Caco-2 (cell line): ENCODE measurements at regions of chr5 and their contacts with region 1.

Region 1: GRCh38 chr5:1107167-1108022 is 4.5 kb downstream of the SLC12A7 start:
- DNase-seq: peak; percentile 50 to 75
- H3K4me3 ChIP-seq: no peak overlapping the region
- H3K4me3 Mint-ChIP-seq: no peak overlapping the region
- H3K27ac Mint-ChIP-seq: peak overlapping the region; percentile 8
- H3K4me1 ChIP-seq: peaks cover 50% of the 10 kb centered on the region
- H3K4me1 Mint-ChIP-seq: peaks cover 21% of the 10 kb centered on the region
- H3K27me3 ChIP-seq: no peaks in the 10 kb centered on the region
- H3K27me3 Mint-ChIP-seq: no peaks in the 10 kb centered on the region
- CTCF ChIP-seq: peak in 1 of 2 experiments; percentile 57

Region 2: DNA sequence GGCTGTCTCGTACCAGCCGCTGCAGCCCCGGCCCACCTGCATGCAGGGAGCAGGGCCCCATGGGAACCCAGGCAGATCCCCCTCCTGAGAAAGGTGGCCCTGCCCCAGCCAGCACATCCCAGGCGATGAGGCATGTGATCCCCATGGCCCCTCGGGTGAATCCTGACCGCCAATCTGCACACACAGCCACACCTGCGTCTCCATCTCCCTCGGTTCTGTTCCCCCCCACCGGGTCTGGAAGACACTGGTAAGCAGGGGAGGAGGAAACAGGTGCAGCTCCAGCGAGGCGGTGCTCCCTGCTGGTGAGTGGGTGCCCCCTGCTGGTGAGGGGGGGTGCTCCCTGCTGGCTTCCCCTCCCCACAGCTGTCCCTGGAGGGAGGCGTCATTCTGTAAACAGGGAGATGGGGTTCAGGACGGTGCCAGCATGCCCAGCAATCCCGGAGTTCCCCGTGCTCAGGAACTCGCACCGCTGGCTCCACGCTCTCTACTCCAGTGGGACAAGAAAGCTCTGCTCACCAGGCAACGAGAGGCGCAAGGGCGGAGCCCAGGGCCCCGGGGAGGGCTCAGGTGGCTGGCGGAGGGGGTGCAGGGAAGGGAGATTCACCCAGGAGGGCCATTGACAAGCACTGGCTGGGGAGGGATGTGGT is 32.9 kb after region 1 on chr5:
- CTCF ChIA-PET with region 1: interaction called, 7 read pairs
- POLR2A ChIA-PET with region 1: interaction called, 3 read pairs
- intact Hi-C with region 1: loop called (anchors 1 kb)
- DNase-seq: peak; percentile 79 to 88
- H3K4me3 ChIP-seq: no peak overlapping the region
- H3K4me3 Mint-ChIP-seq: no peak overlapping the region
- H3K27ac Mint-ChIP-seq: no peak overlapping the region
- H3K4me1 ChIP-seq: peaks cover 7% of the 10 kb centered on the region; the same call in 1 of the 2 replicates
- H3K4me1 Mint-ChIP-seq: peaks cover 7% of the 10 kb centered on the region
- H3K27me3 ChIP-seq: no peaks in the 10 kb centered on the region
- H3K27me3 Mint-ChIP-seq: no peaks in the 10 kb centered on the region
- CTCF ChIP-seq: peak; percentile 92 to 93